Breast epithelium (tissue), 4 donors: ENCODE measurements at regions of chr3 and their contacts with region 1.

Region 1: GRCh38 chr3:55169608-55170010 is 241.8 kb upstream of the LRTM1 start:
- DNase-seq: no peak
- H3K4me3 ChIP-seq: no peak overlapping the region
- H3K27ac ChIP-seq: no peak overlapping the region
- H3K4me1 ChIP-seq: no peaks in the 10 kb centered on the region
- H3K27me3 ChIP-seq: no peaks in the 10 kb centered on the region
- CTCF ChIP-seq: no peak
- POLR2A ChIP-seq: no peak

Region 2: DNA sequence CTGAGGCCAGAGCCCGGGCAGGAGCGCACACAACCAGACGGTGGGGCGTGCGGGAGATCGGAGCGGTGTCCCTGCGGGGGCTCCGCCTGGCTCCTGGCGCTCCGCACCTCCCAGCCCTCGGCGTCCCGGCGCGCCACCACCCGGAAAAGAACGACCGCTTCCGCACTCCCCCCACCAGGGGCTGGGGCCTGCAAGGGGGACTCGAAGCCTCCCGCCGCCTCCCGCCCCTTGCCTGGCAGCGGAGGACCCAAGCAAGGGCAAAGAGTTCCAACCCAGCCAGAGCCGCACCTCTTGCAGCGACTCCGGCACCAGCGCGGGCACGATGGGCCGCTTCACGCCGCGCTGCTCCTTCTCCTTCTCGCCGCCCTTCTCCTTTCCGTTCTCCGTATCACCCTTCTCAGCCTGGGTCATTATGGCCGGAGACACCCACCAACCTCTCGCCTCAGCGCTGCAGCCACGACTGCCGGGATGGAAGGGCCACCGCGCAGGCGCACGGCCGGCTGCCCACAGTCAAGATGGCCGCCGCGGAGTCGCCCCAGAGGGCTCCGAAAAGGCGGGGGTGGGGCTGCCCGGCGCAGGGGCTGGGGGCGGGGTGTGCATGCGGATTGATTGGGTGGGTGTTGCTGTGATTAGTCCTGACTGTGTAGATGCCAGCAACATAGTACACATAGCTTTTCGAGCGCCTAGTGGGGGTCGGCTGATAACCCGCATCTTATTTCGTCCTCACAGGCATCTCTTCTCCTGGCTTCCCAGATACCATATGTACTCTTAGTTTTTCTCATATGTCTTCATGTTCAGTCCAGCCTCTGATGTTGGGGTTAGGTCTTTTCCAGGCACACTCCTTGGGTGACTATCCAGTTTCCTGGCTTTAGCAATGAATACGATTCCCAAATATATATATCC is 1287.7 kb before region 1 on chr3 and contains the start of gene ACTR8:
- intact Hi-C with region 1: loop called (anchors 5 kb)
- DNase-seq: peak; percentile 50 to 72
- H3K4me3 ChIP-seq: peak within 1 kb of the TSS; percentile 95 to 96 (median 96)
- H3K27ac ChIP-seq: peak within 1 kb of the TSS; percentile 74 to 91
- H3K4me1 ChIP-seq: peaks cover 5 to 13% of the 10 kb centered on the region in 2 donors
- H3K27me3 ChIP-seq: no peaks in the 10 kb centered on the region
- CTCF ChIP-seq: peak in 2 of 3 donors; percentile 16 to 32
- POLR2A ChIP-seq: no peak
- total RNA-seq, gene ACTR8: 20.0 to 29.0 (median 22.6) TPM

Region 3: GRCh38 chr3:55097441-55097840 is 72.2 kb before region 1 on chr3:
- intact Hi-C with region 1: no loop called
- DNase-seq: no peak
- H3K4me3 ChIP-seq: no peak overlapping the region
- H3K27ac ChIP-seq: no peak overlapping the region
- H3K4me1 ChIP-seq: no peaks in the 10 kb centered on the region
- H3K27me3 ChIP-seq: no peaks in the 10 kb centered on the region
- CTCF ChIP-seq: no peak
- POLR2A ChIP-seq: no peak

Region 4: DNA sequence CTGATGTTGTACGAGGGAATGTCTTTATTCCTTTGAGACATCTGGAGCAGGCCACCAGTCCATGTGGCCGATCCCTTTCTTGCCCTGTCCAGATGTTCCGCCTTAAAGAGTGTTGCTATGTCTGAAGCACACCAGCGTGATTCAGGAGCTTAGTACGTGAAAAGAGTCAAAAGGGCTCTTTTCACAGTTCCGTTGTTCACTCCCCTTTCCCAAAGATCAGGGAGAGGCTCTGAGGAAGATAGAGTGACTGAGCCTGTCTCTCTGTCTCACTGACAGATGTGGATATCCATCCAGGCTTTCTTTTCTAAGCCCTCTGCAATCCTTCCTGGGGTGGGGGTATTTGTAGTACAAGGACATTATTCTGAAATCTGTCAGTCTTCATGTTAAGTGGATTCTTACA is 20.7 kb after region 1 on chr3:
- intact Hi-C with region 1: loop called (anchors 1 kb)
- DNase-seq: no peak
- H3K4me3 ChIP-seq: no peak overlapping the region
- H3K27ac ChIP-seq: peak overlapping the region in 1 of 2 donors; percentile 1
- H3K4me1 ChIP-seq: no peaks in the 10 kb centered on the region
- H3K27me3 ChIP-seq: no peaks in the 10 kb centered on the region
- CTCF ChIP-seq: no peak
- POLR2A ChIP-seq: no peak

Region 5: GRCh38 chr3:55205990-55206389 is 36.4 kb after region 1 on chr3:
- intact Hi-C with region 1: no loop called
- DNase-seq: no peak
- H3K4me3 ChIP-seq: no peak overlapping the region
- H3K27ac ChIP-seq: no peak overlapping the region
- H3K4me1 ChIP-seq: no peaks in the 10 kb centered on the region
- H3K27me3 ChIP-seq: no peaks in the 10 kb centered on the region
- CTCF ChIP-seq: no peak
- POLR2A ChIP-seq: no peak

Region 6: GRCh38 chr3:55868347-55868746 is 698.7 kb after region 1 on chr3:
- intact Hi-C with region 1: loop called (anchors 5 kb)
- DNase-seq: no peak
- H3K4me3 ChIP-seq: no peak overlapping the region
- H3K27ac ChIP-seq: no peak overlapping the region
- H3K4me1 ChIP-seq: no peaks in the 10 kb centered on the region
- H3K27me3 ChIP-seq: no peaks in the 10 kb centered on the region
- CTCF ChIP-seq: no peak
- POLR2A ChIP-seq: no peak